Panc1 (cell line): ENCODE measurements at regions of chr11 and their contacts with region 1.

Region 1: GRCh38 chr11:7143908-7144307 is 55.1 kb downstream of the RBMXL2 start:
- DNase-seq: peak; percentile 43
- ATAC-seq: peak; percentile 74
- H3K4me3 ChIP-seq: no peak overlapping the region
- H3K27ac ChIP-seq: no peak overlapping the region
- H3K4me1 ChIP-seq: no peaks in the 10 kb centered on the region
- H3K27me3 ChIP-seq: 0 out of 2 replicates have a peak, but pooled peaks cover 9% of the 10 kb centered on the region
- CTCF ChIP-seq: peak; percentile 66; the same call in 1 of the 2 replicates

Region 2: DNA sequence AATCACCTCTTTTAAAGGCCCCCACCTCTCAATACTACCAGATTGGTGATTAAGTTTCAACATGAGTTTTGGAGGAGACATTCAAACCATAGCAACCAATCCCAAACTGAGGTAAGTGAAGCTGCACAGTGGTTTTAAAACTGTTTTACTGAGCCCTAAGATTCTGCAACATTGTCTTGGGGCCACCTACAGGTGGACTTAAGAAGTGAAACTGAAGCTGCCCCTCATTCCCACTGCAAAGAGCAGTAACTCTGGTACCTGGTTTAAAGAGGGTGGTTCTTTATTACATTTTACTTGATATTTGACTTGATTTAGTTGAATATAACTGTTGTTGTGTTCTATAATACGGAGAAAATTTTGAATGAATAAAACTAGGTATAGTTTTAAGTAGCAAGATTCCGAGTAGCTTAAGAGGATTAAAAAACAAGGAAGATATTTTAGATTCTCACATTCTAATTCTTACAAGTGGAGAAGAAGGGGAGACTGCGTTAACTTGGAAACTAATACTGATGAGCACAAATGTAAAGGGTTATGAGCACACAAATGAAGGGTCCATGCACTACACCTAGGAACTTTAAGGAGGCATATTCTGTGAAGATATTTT is 134.5 kb after region 1 on chr11:
- CTCF ChIA-PET with region 1: interaction called, 3 read pairs
- POLR2A ChIA-PET with region 1: no interaction called
- in situ Hi-C with region 1: no loop called
- intact Hi-C with region 1: loop called (anchors 10 kb)
- DNase-seq: peak; percentile 51
- ATAC-seq: peak; percentile 78
- H3K4me3 ChIP-seq: no peak overlapping the region
- H3K27ac ChIP-seq: no peak overlapping the region
- H3K4me1 ChIP-seq: no peaks in the 10 kb centered on the region
- H3K27me3 ChIP-seq: no peaks in the 10 kb centered on the region
- CTCF ChIP-seq: peak; percentile 91